ENCODE measurements at regions of chr12 and their contacts with region 1.

Region 1: GRCh38 chr12:12983420-12984035 is 16.5 kb downstream of the HEBP1 start:
- DNase-seq: peak in 2 of 10 donors; percentile 31 to 44

Region 2: GRCh38 chr12:12837025-12837872 is 146.3 kb before region 1 on chr12:
- intact Hi-C with region 1: loop called (anchors 2 kb)
- DNase-seq: no peak

Region 3: DNA sequence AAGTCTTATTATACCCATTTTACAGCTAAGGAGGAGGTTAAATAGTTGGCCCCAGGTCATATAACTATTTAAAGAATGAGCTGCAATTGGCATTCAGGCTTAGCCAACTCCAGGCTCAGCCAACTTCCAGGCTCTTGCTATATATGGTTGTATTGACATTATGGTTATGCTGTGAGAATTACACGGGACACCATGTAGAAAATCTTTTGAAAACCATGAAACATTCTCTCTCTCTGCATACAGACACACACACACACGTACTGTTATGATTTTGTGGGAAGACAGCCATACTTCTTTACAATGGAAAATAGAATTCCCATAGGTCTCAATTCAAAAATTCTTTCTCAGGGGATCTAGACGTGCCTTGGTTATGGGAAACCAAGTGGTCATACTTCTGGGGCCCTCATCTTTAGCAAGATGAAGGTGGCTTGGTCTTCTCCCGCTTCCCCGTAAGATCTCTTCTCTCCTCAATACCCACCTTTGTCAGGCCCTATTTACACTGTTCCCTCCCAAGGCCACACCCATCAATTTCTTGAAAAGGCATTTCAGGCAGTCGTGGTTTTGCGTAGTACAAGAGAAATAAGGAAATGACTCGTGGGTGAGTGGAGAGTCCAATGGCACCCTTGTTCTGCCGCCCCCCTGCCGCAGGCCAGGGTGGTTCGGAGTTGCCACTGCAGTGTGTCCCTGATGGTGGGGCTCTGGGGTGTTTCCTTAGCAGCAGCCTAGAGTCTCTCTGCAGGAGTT is 102.2 kb before region 1 on chr12:
- intact Hi-C with region 1: no loop called
- DNase-seq: no peak

Region 4: DNA sequence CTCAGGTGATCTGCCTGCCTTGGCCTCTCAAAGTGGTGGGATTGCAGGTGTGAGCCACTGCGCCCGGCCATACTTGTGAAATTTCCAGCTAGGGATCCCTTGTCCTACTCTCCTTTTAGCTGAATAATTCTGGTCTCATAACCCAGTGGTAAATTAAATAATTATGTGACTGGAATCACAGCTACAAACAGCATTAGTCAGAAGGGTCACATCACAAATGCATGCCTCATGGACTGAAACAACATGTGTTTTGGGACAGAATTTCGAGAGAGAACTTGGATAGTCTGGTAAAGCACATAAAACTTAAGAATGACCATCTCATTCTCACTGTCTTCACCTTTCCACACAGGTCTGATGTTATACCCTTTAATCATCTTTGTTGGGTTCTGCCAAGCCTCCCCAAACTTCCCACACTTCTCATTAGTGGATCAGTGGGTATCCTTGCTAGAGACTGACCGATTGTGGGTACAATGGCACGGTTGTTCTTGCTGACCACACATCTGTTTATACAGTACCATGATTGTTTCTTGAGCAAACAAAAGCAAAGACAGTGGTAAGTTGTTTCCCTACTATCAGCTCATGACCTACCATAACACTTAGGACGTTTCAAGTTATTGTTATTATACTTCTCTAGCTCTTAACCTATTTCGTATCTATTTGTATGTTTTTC is 36.7 kb before region 1 on chr12:
- intact Hi-C with region 1: no loop called
- DNase-seq: peak in 4 of 10 donors; percentile 19 to 56 (median 42)

Measured in posterior cingulate gyrus (tissue), 11 donors.